HCT116 (cell line): ENCODE measurements at regions of chr1 and their contacts with region 1.

Region 1: DNA sequence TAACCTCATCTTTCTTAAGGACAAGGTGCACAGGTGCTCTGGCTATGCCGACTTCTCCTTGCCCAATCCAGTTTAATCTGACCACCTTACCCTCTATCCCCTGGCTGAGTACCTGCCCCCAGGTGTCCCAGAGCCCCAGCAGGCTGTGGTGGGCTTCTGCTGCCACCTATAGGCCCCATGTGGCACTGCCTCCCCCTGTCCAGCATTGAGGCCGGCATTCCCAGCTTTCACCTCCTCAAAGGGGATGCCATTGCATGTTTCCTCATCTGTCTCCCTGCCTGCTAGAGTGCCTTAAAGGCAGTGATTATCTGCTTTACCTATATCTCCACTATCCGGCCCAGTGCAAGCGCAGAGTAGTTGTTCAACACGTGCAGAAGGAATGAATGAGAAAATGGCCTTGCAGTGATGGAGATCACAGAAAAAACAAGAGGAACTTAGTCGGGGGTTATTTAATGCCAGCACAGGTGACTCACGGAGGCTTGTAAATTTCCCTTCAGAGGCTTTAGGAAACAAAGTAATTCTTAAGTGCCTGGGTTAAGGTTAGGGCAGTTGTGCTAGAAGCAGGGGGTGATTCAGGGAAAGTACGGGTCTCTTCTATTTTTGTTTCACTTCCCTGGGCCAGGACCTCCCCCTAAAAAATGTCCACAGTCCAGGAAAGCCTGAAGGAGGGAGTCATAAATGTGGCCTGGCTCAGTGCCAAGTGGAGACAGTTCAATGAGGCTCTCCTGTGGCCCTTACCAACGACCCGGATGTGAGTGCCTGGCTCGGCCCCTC is 131.8 kb upstream of the NGF start:
- DNase-seq: peak; percentile 31
- ATAC-seq: peak; percentile 97
- H3K4me3 ChIP-seq: peak overlapping the region in 1 of 2 experiments; percentile 25; a peak in 1 of 4 replicates
- H3K27ac ChIP-seq: no peak overlapping the region
- H3K4me1 ChIP-seq: peaks cover 4 to 8% of the 10 kb centered on the region in 2 experiments; a peak in 3 of 4 replicates
- H3K27me3 ChIP-seq: no peaks in the 10 kb centered on the region
- CTCF ChIP-seq: peak; percentile 83 to 98 (median 98)
- POLR2A ChIP-seq: no peak
- RAD21 ChIP-seq: peak; percentile 93

Region 2: GRCh38 chr1:114695430-114696058 is 774.3 kb before region 1 on chr1 and contains the start of gene AMPD1:
- CTCF ChIA-PET with region 1: no interaction called
- POLR2A ChIA-PET with region 1: no interaction called
- RAD21 ChIA-PET with region 1: no interaction called
- intact Hi-C with region 1: no loop called
- DNase-seq: no peak
- ATAC-seq: no peak
- H3K4me3 ChIP-seq: no peak within 1 kb of the TSS
- H3K27ac ChIP-seq: no peak within 1 kb of the TSS
- H3K4me1 ChIP-seq: no peaks in the 10 kb centered on the region
- H3K27me3 ChIP-seq: no peaks in the 10 kb centered on the region
- CTCF ChIP-seq: no peak
- POLR2A ChIP-seq: no peak
- RAD21 ChIP-seq: no peak
- total RNA-seq, gene AMPD1: not detected

Region 3: DNA sequence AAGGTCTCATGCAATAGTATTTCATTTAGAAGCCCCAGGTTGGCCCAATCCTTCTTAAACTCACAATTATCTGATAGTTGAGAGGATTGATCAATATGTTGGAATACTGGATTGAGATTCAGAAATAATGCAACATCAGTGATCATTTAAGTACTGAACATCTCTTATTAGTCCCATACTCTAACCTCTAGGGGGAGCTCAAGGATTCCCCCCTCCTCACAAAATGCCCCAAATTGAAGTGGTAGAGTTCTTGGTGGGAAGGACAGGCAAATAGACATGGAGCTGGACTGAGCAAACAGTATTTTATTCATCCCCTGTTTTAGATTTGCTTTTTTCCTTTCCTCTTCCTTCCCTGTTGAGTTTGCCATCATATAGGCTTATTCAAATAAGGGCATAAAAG is 194.7 kb before region 1 on chr1:
- CTCF ChIA-PET with region 1: no interaction called
- POLR2A ChIA-PET with region 1: no interaction called
- RAD21 ChIA-PET with region 1: no interaction called
- intact Hi-C with region 1: loop called (anchors 10 kb)
- DNase-seq: peak; percentile 7
- ATAC-seq: peak; percentile 54; the same call in 1 of the 2 replicates
- H3K4me3 ChIP-seq: no peak overlapping the region
- H3K27ac ChIP-seq: no peak overlapping the region
- H3K4me1 ChIP-seq: no peaks in the 10 kb centered on the region
- H3K27me3 ChIP-seq: no peaks in the 10 kb centered on the region
- CTCF ChIP-seq: peak; percentile 17 to 67 (median 64); a peak in 4 of 6 replicates
- POLR2A ChIP-seq: no peak
- RAD21 ChIP-seq: peak; percentile 45

Region 4: GRCh38 chr1:115595279-115596079 is 125.6 kb after region 1 on chr1:
- CTCF ChIA-PET with region 1: interaction called, 5 read pairs
- POLR2A ChIA-PET with region 1: no interaction called
- RAD21 ChIA-PET with region 1: no interaction called
- intact Hi-C with region 1: loop called (anchors 5 kb)
- DNase-seq: peak; percentile 68
- ATAC-seq: peak; percentile 97
- H3K4me3 ChIP-seq: no peak overlapping the region
- H3K27ac ChIP-seq: no peak overlapping the region
- H3K4me1 ChIP-seq: peaks cover 4% of the 10 kb centered on the region in 2 experiments; a peak in 2 of 4 replicates
- H3K27me3 ChIP-seq: no peaks in the 10 kb centered on the region
- CTCF ChIP-seq: peak; percentile 76 to 97 (median 90)
- POLR2A ChIP-seq: no peak
- RAD21 ChIP-seq: peak; percentile 91